ENCODE measurements at regions of chr3 and their contacts with region 1.

Region 1: GRCh38 chr3:141231101-141231935 is at the start of gene PXYLP1:
- DNase-seq: peak; percentile 93 to 95 (median 94)
- ATAC-seq: peak; percentile 99
- H3K4me3 ChIP-seq: peak within 1 kb of the TSS; percentile 49
- H3K27ac ChIP-seq: peak within 1 kb of the TSS; percentile 55
- H3K4me1 ChIP-seq: peaks cover 7 to 21% of the 10 kb centered on the region in 2 experiments
- H3K27me3 ChIP-seq: peaks cover 13 to 42% of the 10 kb centered on the region in 2 experiments; a peak in 4 of 5 replicates
- CTCF ChIP-seq: peak; percentile 58 to 89 (median 80)
- EP300 ChIP-seq: no peak
- POLR2A ChIP-seq: peak; percentile 80
- RAD21 ChIP-seq: peak; percentile 63 to 71
- polyA plus RNA-seq, gene PXYLP1: 0.80 to 1.1 TPM

Region 2: DNA sequence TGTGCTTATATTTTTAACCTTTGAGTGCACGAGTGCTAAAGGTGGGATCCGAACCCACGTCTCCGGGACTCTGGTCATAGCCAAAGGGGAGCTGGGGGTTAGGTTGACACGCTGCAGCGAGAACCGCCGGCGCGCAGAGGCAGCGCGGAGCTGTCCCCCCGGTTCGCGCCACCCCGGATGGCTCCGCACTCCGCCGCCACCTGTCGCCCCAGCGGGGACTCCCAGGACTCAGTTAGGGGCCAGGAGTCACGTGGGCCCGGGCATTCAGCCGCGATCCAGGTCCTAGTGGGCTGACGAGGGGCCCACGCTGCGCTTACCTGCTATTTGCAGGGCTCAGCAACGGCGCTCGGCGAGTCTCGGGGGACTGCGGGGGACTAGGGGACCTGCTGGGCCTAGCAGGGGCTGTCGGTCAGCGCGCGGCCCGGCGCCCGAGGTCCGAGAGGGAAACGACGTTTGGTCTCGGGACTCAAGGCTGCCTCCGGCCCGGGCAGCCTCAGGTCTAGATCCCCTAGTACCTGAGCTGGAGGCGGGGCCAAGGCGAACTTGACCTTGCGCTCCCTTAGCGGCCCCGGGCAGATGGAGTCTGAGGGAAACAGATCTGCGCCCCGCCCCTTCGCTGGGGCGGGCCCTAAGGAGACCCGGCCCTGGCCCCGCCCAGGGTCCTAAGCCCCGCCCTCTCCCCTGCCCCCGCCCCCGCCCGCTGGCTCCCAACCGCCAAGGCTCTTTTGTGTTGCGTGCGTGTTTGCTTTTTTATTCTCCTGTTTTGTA is 1553.7 kb before region 1 on chr3 and contains the start of gene NMNAT3:
- CTCF ChIA-PET with region 1: no interaction called
- POLR2A ChIA-PET with region 1: no interaction called
- in situ Hi-C with region 1: no loop called
- intact Hi-C with region 1: no loop called
- DNase-seq: peak; percentile 93 to 98 (median 97)
- ATAC-seq: peak; percentile 98
- H3K4me3 ChIP-seq: peak within 1 kb of the TSS; percentile 70
- H3K27ac ChIP-seq: peak within 1 kb of the TSS; percentile 81
- H3K4me1 ChIP-seq: peaks cover 7 to 9% of the 10 kb centered on the region in 2 experiments; a peak in 4 of 5 replicates
- H3K27me3 ChIP-seq: no peaks in the 10 kb centered on the region
- CTCF ChIP-seq: peak in 2 of 3 experiments; percentile 20 to 21; a peak in 1 of 6 replicates
- EP300 ChIP-seq: no peak
- POLR2A ChIP-seq: peak; percentile 80
- RAD21 ChIP-seq: no peak
- polyA plus RNA-seq, gene NMNAT3: 2.3 to 3.1 TPM

Region 3: DNA sequence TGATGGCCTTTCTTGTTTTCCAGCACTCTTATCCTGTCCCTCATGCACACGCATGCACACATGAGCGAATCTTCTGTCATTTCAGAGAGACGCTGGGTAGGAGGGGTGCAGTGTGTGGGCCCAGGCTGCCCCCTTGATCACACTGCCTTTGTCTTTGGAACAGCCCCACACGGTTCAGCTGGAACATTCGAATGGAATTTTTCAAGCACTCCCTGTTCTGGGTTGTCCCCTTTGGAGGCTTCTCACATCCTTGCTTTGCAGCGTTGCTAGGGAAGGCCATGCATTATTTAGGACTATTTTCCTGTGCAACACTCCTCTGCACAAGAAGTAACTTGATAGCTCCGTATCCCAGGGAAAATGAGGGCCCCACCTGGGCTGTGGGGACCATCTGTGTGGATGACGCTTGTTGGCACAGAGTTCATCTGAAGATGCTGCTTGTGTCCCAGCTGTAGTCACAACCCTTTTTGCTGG is 101.7 kb before region 1 on chr3:
- CTCF ChIA-PET with region 1: no interaction called
- POLR2A ChIA-PET with region 1: no interaction called
- in situ Hi-C with region 1: no loop called
- intact Hi-C with region 1: no loop called
- DNase-seq: no peak
- ATAC-seq: no peak
- H3K4me3 ChIP-seq: no peak overlapping the region
- H3K27ac ChIP-seq: no peak overlapping the region
- H3K4me1 ChIP-seq: no peaks in the 10 kb centered on the region
- H3K27me3 ChIP-seq: peaks cover 0 to 19% of the 10 kb centered on the region in 2 experiments; a peak in 2 of 5 replicates
- CTCF ChIP-seq: no peak
- EP300 ChIP-seq: no peak
- POLR2A ChIP-seq: no peak
- RAD21 ChIP-seq: no peak

Region 4: GRCh38 chr3:141279077-141279967 is 48.0 kb after region 1 on chr3:
- CTCF ChIA-PET with region 1: no interaction called
- POLR2A ChIA-PET with region 1: interaction called, 3 read pairs
- in situ Hi-C with region 1: no loop called
- intact Hi-C with region 1: loop called (anchors 5 kb)
- DNase-seq: peak in 3 of 4 experiments; percentile 23 to 48 (median 32)
- ATAC-seq: peak; percentile 89
- H3K4me3 ChIP-seq: no peak overlapping the region
- H3K27ac ChIP-seq: no peak overlapping the region
- H3K4me1 ChIP-seq: no peaks in the 10 kb centered on the region; a peak in 2 of 5 replicates
- H3K27me3 ChIP-seq: peaks cover 2 to 24% of the 10 kb centered on the region in 2 experiments; a peak in 3 of 5 replicates
- CTCF ChIP-seq: peak; percentile 69 to 77 (median 70)
- EP300 ChIP-seq: no peak
- POLR2A ChIP-seq: no peak
- RAD21 ChIP-seq: peak; percentile 41 to 60